Activated B cell treated with CpG ODN at 0.5 μM for 24 hours (primary cell): ENCODE measurements at regions of chr1 and their contacts with region 1.

Region 1: DNA sequence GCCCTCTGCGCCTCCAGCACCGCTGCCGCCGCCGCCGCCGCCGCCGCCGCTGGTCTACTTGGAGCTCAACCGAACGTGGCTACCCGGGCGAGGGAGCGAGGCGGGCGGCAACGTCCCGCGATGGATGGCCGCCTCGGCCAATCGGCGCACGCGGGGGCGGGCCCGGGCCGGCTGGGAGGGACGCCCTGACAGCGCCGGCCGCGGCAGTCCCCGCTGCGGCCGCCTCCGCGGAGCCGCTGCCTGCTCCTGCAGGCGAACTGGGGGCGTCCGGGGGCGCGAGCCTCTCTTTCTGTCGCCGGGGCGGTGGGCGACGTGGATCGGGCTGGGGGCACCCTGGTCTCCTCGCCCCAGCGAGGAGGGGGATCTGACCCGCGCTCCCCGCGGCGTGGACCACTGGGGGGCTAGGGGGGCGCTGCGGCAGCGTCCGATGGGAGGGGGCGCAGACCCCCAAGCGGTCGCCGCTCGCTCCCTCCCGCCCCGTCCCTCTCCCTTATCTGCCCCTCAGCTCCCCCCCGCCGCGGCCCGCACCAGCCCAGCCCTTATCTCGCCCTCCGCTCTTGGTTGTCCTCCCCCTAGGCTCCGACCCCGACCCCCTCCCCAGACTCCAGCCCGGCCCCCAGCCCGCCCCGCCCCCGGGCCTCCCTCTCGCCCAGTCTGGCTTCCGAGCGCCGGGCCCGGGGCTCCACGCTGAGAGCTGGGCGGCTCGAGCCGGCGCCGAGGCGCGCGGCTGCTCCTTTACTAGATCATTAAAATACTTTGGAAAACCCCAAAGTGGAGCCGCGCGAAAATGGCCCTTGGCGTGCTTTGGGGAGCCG is at the start of gene SSBP3:
- DNase-seq: peak; percentile 95
- ATAC-seq: peak; percentile 93
- H3K4me3 Mint-ChIP-seq: peak within 1 kb of the TSS; percentile 91
- H3K27ac Mint-ChIP-seq: peak within 1 kb of the TSS; percentile 89
- H3K4me1 Mint-ChIP-seq: peaks cover 49% of the 10 kb centered on the region
- H3K27me3 Mint-ChIP-seq: no peaks in the 10 kb centered on the region
- CTCF ChIP-seq: no peak
- total RNA-seq, gene SSBP3: 23.1 and 29.7 TPM in 2 replicates

Region 2: DNA sequence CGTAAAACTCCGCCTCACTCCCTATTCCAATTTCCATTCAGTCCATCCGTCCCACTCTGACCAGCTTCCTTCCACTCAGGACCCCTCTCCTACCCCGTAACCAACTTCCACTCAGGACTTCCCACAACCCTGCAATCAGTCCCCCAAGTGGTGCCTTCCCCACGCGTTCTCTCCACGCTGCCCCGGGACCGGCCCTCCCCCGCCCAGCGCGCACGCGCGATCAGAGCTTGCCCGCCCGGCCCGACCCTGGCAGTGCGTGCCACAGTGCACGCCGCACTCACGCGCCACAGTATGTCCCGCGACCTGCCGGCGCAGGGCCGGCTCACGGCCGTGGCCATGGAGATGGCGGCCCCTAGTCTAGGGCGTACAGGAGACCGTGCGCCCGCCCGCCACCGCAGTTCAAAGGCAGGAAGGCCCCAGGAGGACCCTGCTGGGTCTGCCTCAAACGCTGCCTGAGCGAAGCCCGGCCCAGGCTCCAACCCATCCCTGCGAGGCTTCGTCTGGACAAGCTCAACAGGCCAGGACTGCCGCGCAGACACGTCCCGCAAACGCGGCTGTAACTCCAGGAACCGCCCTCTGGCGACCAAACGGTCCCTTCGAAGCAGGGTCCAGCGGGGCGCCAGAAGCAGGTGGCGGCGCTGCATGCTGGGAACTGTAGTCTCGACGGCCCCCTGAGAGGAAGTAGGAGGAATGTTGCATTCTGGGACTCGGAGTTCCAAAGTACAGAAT is 568.5 kb before region 1 on chr1 and contains the start of gene NDC1:
- CTCF ChIA-PET with region 1: no interaction called
- POLR2A ChIA-PET with region 1: no interaction called
- intact Hi-C with region 1: loop called (anchors 1 kb)
- DNase-seq: peak; percentile 86
- ATAC-seq: peak; percentile 89
- H3K4me3 Mint-ChIP-seq: peak within 1 kb of the TSS; percentile 94
- H3K27ac Mint-ChIP-seq: peak within 1 kb of the TSS; percentile 98
- H3K4me1 Mint-ChIP-seq: peaks cover 33% of the 10 kb centered on the region
- H3K27me3 Mint-ChIP-seq: no peaks in the 10 kb centered on the region
- CTCF ChIP-seq: no peak
- total RNA-seq, gene NDC1: 10.6 and 14.0 TPM in 2 replicates

Region 3: DNA sequence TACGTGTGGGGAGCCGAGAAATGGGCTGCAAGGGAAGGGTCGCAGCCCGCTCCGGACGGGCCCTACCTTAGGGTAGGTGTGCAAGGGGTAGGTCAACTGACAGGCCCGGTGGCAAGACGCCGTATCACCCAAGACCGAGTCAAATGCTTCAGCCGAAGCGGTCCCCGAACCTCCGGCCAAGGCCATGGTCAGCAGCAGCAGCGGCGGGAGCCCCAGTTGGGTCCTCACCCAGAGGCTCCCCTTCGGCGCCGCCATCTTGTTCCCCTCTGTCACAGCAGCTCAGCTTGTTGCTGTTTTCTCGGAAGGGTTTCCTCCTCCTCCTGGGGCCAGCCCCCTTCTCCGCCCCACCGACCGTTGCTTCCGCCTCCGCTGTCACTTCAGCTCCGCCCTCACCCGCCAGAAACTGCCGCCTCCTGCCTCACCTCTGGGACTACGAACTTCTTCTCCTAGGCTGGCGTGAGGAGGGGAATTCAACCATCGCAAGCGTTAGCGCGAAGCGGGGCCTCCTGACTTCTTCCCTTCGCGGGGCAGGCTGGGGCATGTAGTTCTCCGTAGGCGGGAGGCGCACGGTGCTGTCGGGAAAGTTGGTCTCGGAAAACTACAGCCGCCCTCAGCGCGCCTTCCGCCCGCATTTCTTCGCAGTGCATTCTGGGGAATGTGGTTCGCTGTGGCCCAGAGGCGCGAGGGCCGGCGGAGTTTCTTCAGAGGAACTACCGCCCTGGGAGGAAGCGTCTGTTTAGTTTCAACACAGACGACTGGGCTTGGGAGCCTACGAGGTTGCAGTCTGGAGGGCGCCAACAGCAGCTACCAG is 353.4 kb before region 1 on chr1 and contains the starts of genes TCEANC2 and TMEM59:
- CTCF ChIA-PET with region 1: no interaction called
- POLR2A ChIA-PET with region 1: interaction called, 44 read pairs
- intact Hi-C with region 1: loop called (anchors 1 kb)
- DNase-seq: peak; percentile 92
- ATAC-seq: peak; percentile 92
- H3K4me3 Mint-ChIP-seq: no peak within 1 kb of the TSS
- H3K27ac Mint-ChIP-seq: no peak within 1 kb of the TSS
- H3K4me1 Mint-ChIP-seq: peaks cover 38% of the 10 kb centered on the region
- H3K27me3 Mint-ChIP-seq: no peaks in the 10 kb centered on the region
- CTCF ChIP-seq: no peak
- total RNA-seq, gene TCEANC2: 7.3 and 8.1 TPM in 2 replicates
- total RNA-seq, gene TMEM59: 103 and 123 TPM in 2 replicates

Region 4: DNA sequence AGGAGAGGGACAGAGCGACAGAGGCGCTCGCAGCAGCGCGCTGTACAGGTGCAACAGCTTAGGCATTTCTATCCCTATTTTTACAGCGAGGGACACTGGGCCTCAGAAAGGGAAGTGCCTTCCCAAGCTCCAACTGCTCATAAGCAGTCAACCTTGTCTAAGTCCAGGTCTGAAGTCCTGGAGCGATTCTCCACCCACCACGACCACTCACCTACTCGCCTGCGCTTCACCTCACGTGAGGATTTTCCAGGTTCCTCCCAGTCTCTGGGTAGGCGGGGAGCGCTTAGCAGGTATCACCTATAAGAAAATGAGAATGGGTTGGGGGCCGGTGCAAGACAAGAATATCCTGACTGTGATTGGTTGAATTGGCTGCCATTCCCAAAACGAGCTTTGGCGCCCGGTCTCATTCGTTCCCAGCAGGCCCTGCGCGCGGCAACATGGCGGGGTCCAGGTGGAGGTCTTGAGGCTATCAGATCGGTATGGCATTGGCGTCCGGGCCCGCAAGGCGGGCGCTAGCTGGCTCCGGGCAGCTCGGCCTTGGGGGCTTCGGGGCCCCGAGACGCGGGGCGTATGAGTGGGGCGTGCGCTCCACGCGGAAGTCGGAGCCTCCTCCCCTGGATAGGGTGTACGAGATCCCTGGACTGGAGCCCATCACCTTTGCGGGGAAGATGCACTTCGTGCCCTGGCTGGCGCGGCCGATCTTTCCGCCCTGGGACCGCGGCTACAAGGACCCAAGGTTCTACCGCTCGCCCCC is 206.6 kb before region 1 on chr1 and contains the starts of genes CYB5RL and MRPL37:
- CTCF ChIA-PET with region 1: no interaction called
- POLR2A ChIA-PET with region 1: interaction called, 26 read pairs
- intact Hi-C with region 1: loop called (anchors 1 kb)
- DNase-seq: peak; percentile 74
- ATAC-seq: peak; percentile 99
- H3K4me3 Mint-ChIP-seq: peak within 1 kb of the TSS; percentile 92
- H3K27ac Mint-ChIP-seq: peak within 1 kb of the TSS; percentile 81
- H3K4me1 Mint-ChIP-seq: peaks cover 32% of the 10 kb centered on the region
- H3K27me3 Mint-ChIP-seq: no peaks in the 10 kb centered on the region
- CTCF ChIP-seq: no peak
- total RNA-seq, gene CYB5RL: 8.4 and 8.7 TPM in 2 replicates
- total RNA-seq, gene MRPL37: 62.5 and 64.1 TPM in 2 replicates

Region 5: GRCh38 chr1:54331091-54331772 is 75.3 kb before region 1 on chr1:
- CTCF ChIA-PET with region 1: no interaction called
- POLR2A ChIA-PET with region 1: no interaction called
- intact Hi-C with region 1: no loop called
- DNase-seq: no peak
- ATAC-seq: no peak
- H3K4me3 Mint-ChIP-seq: no peak overlapping the region
- H3K27ac Mint-ChIP-seq: no peak overlapping the region
- H3K4me1 Mint-ChIP-seq: peaks cover 26% of the 10 kb centered on the region
- H3K27me3 Mint-ChIP-seq: no peaks in the 10 kb centered on the region
- CTCF ChIP-seq: no peak

Region 6: DNA sequence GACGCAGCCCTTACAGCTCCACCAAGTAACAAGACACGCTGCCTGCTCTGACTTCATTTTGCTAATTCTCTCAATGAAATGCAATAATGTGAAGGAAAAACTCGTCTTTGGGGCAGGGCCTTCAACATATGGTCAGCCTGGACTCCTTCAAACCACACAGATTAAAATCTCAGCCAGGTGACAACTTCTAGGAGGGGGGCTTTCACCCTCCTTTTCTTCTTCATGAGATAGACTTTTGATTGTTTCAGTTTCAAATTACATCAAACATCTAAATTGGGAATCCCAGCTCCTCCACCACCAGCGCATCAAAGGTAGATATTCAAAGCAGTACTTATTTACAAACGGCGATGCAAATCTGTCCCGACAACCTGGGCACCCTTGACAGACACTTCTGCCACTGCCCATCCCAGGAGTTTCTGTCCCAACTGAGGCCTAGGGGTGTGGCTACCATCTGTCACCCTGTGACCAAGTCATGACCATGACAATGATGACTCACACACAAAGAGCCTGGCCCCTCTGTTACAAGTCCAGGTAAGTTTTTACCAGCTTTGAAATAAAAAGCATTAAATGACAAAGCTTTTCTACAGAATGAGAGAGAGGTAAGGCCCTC is 30.0 kb before region 1 on chr1:
- CTCF ChIA-PET with region 1: interaction called, 4 read pairs
- POLR2A ChIA-PET with region 1: interaction called, 11 read pairs
- intact Hi-C with region 1: loop called (anchors 1 kb)
- DNase-seq: no peak
- ATAC-seq: peak; percentile 78
- H3K4me3 Mint-ChIP-seq: peak overlapping the region; percentile 36
- H3K27ac Mint-ChIP-seq: peak overlapping the region; percentile 85
- H3K4me1 Mint-ChIP-seq: peaks cover 65% of the 10 kb centered on the region
- H3K27me3 Mint-ChIP-seq: no peaks in the 10 kb centered on the region
- CTCF ChIP-seq: no peak

Region 7: DNA sequence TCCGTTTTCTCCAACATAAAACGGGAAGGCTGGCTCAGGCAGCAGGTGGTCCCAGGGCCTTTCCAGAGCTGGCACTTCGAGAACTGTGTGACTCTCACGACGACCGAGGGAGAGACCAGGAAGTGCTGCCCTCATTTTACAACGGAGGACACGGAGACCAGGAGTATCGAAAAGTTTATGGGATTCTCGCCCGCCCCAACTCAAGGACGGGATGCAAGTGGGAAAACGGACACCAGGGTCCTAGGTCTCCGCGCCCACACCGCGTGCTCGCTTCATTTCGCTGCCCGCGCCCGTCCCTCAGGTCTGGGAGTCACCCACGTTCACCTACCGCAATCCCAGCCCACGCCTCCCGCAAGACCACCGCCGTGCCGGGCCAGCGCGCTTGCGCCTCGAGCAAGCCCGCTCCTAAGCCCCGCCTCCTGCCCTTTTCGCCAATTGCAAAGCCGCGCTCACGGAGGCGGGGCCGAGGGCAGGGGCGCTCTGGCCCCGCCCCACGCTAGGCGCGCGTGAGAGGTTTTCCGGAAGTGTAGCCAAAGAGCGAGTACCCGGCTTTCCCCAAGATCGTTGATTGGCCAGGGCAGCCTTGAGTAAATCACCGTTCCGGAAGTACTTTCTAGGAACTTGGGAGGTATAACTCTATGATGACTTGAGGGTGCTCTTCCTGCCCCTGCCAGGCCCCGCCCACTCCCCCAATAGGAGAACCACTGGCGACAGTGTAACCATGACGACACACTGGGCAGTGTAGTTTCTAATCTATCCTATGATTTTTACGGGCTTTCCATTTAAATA is 357.8 kb after region 1 on chr1 and contains the start of gene PARS2:
- CTCF ChIA-PET with region 1: no interaction called
- POLR2A ChIA-PET with region 1: no interaction called
- intact Hi-C with region 1: loop called (anchors 1 kb)
- DNase-seq: peak; percentile 91
- ATAC-seq: peak; percentile 92
- H3K4me3 Mint-ChIP-seq: peak within 1 kb of the TSS; percentile 90
- H3K27ac Mint-ChIP-seq: peak within 1 kb of the TSS; percentile 89
- H3K4me1 Mint-ChIP-seq: peaks cover 24% of the 10 kb centered on the region
- H3K27me3 Mint-ChIP-seq: no peaks in the 10 kb centered on the region
- CTCF ChIP-seq: no peak
- total RNA-seq, gene PARS2: 4.3 and 4.8 TPM in 2 replicates